Cardiac septum (tissue), 1 donor: ENCODE measurements at regions of chr16 and their contacts with region 1.

Region 1: GRCh38 chr16:20383106-20384029 is 21.2 kb downstream of the PDILT start:
- DNase-seq: no peak

Region 2: GRCh38 chr16:19907161-19907992 is 476.0 kb before region 1 on chr16:
- intact Hi-C with region 1: loop called (anchors 2 kb)
- DNase-seq: no peak